ENCODE measurements at regions of chr17 and their contacts with region 1.

Region 1: GRCh38 chr17:2786176-2786881 is 9.9 kb upstream of the RAP1GAP2 start:
- DNase-seq: peak; percentile 93 to 95
- ATAC-seq: peak; percentile 98 to 99 (median 99)
- H3K4me3 ChIP-seq: no peak overlapping the region
- H3K4me3 Mint-ChIP-seq: no peak overlapping the region
- H3K27ac ChIP-seq: no peak overlapping the region
- H3K27ac Mint-ChIP-seq: no peak overlapping the region
- H3K4me1 ChIP-seq: peaks cover 26% of the 10 kb centered on the region
- H3K4me1 Mint-ChIP-seq: peaks cover 5 to 18% of the 10 kb centered on the region in 2 donors
- H3K27me3 ChIP-seq: no peaks in the 10 kb centered on the region
- H3K27me3 Mint-ChIP-seq: no peaks in the 10 kb centered on the region
- CTCF ChIP-seq: peak; percentile 96

Region 2: DNA sequence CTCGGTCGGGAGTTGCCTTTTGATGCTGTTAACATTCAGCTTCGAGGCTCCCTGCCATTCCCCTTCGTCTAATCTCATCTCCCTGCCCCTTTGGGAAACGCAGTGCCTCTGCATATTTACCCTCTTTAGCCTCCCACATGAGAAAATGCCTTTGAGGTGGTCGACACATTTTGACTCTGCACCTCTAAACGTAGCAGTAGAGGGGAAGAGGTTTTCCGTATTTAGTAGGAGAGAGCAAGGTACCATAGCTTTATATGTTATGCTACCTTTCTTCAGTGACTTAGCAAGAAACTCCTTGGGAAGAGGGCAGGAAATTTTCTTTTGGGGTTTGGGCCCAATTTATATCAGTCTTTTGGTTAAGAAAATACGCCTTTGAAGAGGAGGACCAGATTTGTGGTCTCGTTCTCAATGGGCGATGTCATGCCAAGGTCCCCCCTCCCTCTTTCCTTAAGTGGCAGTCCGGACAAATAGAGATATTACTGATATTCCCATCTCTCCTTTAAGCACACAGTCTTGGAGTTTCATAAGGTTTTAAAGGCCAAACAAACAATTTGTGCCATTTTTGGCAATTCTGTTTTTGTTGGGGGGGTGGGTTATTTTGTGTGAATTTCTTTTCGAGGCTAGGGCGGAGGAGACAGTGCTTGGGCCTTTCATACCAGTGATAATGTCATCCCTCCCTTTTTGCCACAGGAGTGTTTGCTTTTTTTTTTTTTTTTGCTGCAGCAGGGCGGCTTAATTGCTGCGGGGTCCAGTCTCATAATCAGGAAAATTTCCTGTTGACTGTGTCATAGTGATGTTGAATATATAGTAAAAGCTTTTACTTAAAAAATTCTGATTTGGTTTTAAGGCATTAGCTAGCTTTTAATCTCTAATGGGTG is 191.4 kb before region 1 on chr17:
- intact Hi-C with region 1: no loop called
- DNase-seq: peak in 1 of 2 donors; percentile 47
- ATAC-seq: no peak
- H3K4me3 ChIP-seq: peak overlapping the region; percentile 66
- H3K4me3 Mint-ChIP-seq: peak overlapping the region; percentile 93
- H3K27ac ChIP-seq: peak overlapping the region; percentile 99
- H3K27ac Mint-ChIP-seq: peak overlapping the region; percentile 88 to 93
- H3K4me1 ChIP-seq: peaks cover 22% of the 10 kb centered on the region
- H3K4me1 Mint-ChIP-seq: peaks cover 40 to 47% of the 10 kb centered on the region in 2 donors
- H3K27me3 ChIP-seq: no peaks in the 10 kb centered on the region
- H3K27me3 Mint-ChIP-seq: no peaks in the 10 kb centered on the region
- CTCF ChIP-seq: no peak

Region 3: DNA sequence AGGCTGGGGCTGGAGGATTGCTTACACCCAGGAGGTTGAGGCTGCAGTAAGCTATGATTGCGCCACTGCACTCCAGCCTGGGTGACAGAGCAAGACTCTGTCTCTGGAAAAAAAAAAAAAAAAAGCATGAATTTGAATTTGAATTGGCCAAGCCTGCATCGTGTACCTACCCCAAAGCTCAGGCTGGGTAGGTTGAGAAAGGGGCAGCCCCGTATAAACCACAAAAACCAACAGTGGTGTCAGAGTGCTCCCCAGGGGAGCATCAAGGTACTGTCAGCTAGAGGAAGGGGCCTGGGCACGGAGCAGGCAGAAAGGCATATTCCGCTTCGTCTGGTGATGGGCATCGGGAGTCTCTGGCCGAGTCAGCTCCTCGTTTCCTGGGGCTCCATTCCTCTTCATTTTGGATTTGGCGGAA is 50.8 kb after region 1 on chr17:
- intact Hi-C with region 1: loop called (anchors 1 kb)
- DNase-seq: peak; percentile 39 to 75
- ATAC-seq: peak; percentile 79 to 95 (median 91)
- H3K4me3 ChIP-seq: no peak overlapping the region
- H3K4me3 Mint-ChIP-seq: no peak overlapping the region
- H3K27ac ChIP-seq: no peak overlapping the region
- H3K27ac Mint-ChIP-seq: peak overlapping the region; percentile 78 to 80
- H3K4me1 ChIP-seq: peaks cover 36% of the 10 kb centered on the region
- H3K4me1 Mint-ChIP-seq: peaks cover 21 to 54% of the 10 kb centered on the region in 2 donors
- H3K27me3 ChIP-seq: no peaks in the 10 kb centered on the region
- H3K27me3 Mint-ChIP-seq: no peaks in the 10 kb centered on the region
- CTCF ChIP-seq: peak; percentile 41

Region 4: GRCh38 chr17:3012926-3013581 is 226.7 kb after region 1 on chr17:
- intact Hi-C with region 1: loop called (anchors 5 kb)
- DNase-seq: peak in 1 of 2 donors; percentile 72
- ATAC-seq: peak; percentile 60 to 73 (median 68)
- H3K4me3 ChIP-seq: no peak overlapping the region
- H3K4me3 Mint-ChIP-seq: no peak overlapping the region
- H3K27ac ChIP-seq: no peak overlapping the region
- H3K27ac Mint-ChIP-seq: peak overlapping the region in 1 of 2 donors; percentile 69
- H3K4me1 ChIP-seq: no peaks in the 10 kb centered on the region
- H3K4me1 Mint-ChIP-seq: peaks cover 0 to 6% of the 10 kb centered on the region in 2 donors
- H3K27me3 ChIP-seq: no peaks in the 10 kb centered on the region
- H3K27me3 Mint-ChIP-seq: no peaks in the 10 kb centered on the region
- CTCF ChIP-seq: peak; percentile 42